PC-3 (cell line): ENCODE measurements at regions of chr4 and their contacts with region 1.

Region 1: GRCh38 chr4:146407669-146408084 is 114.1 kb downstream of the SLC10A7 start:
- DNase-seq: peak; percentile 84
- ATAC-seq: peak; percentile 96
- H3K4me3 ChIP-seq: peak overlapping the region; percentile 21; the same call in 1 of the 2 replicates
- H3K27ac ChIP-seq: peak overlapping the region; percentile 90
- H3K4me1 ChIP-seq: peaks cover 28% of the 10 kb centered on the region
- H3K27me3 ChIP-seq: no peaks in the 10 kb centered on the region
- CTCF ChIP-seq: no peak

Region 2: GRCh38 chr4:146370841-146371240 is 36.8 kb before region 1 on chr4:
- CTCF ChIA-PET with region 1: no interaction called
- POLR2A ChIA-PET with region 1: no interaction called
- intact Hi-C with region 1: loop called (anchors 1 kb)
- DNase-seq: peak; percentile 57
- ATAC-seq: peak; percentile 88
- H3K4me3 ChIP-seq: no peak overlapping the region
- H3K27ac ChIP-seq: no peak overlapping the region
- H3K4me1 ChIP-seq: peaks cover 9% of the 10 kb centered on the region
- H3K27me3 ChIP-seq: no peaks in the 10 kb centered on the region
- CTCF ChIP-seq: no peak

Region 3: GRCh38 chr4:146442801-146443200 is 35.1 kb after region 1 on chr4:
- CTCF ChIA-PET with region 1: no interaction called
- POLR2A ChIA-PET with region 1: no interaction called
- intact Hi-C with region 1: loop called (anchors 2 kb)
- DNase-seq: peak; percentile 85
- ATAC-seq: peak; percentile 96
- H3K4me3 ChIP-seq: no peak overlapping the region
- H3K27ac ChIP-seq: peak overlapping the region; percentile 5; the same call in 1 of the 2 replicates
- H3K4me1 ChIP-seq: peaks cover 21% of the 10 kb centered on the region
- H3K27me3 ChIP-seq: no peaks in the 10 kb centered on the region
- CTCF ChIP-seq: no peak

Region 4: DNA sequence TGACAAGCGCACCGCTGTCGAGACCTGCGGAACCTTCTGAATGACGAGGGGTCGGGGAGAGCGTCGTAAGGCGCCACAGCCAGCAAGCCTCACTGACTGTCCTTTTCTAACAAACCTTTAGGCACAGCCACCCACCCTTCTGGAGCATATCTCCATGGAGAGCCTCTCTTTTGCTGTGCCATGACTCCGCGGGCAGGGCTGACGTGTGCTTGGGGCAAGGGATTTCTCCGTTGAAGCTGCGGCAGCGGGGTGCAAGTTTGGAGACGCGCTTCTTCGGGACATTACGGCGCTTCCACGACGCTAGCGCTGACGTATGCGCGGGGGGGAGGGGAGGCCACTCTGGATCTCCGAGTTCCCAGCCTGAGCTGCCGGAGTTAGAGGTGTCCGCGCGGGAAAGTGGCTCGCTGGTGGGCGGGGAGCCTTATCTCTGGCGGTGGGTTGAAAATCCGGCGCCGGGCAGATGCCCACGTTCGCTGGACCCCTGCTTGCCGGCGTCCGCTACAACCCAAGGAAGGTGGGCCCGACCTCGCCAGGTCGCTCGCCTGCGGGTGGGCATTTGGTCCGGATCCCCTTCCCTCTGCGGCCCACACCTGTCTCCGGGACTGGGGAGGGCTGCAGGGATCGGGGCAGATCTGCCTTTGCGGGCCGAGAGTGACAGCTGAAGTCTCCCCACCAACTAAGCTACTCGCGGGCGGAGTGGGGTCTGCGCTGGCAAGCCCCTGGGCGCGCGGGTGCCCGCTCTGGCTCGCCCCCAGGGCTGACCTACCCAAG is 114.6 kb after region 1 on chr4:
- CTCF ChIA-PET with region 1: no interaction called
- POLR2A ChIA-PET with region 1: no interaction called
- intact Hi-C with region 1: loop called (anchors 1 kb)
- DNase-seq: peak; percentile 85
- ATAC-seq: peak; percentile 77
- H3K4me3 ChIP-seq: peak overlapping the region; percentile 93
- H3K27ac ChIP-seq: no peak overlapping the region
- H3K4me1 ChIP-seq: peaks cover 15% of the 10 kb centered on the region; the same call in 1 of the 2 replicates
- H3K27me3 ChIP-seq: no peaks in the 10 kb centered on the region
- CTCF ChIP-seq: no peak